ENCODE measurements at regions of chr1 and their contacts with region 1.

Region 1: GRCh38 chr1:27671964-27672749 is at the start of gene IFI6:
- DNase-seq: peak; percentile 89
- H3K4me3 Mint-ChIP-seq: peak within 1 kb of the TSS; percentile 91
- H3K27ac Mint-ChIP-seq: peak within 1 kb of the TSS; percentile 84
- H3K4me1 Mint-ChIP-seq: peaks cover 29% of the 10 kb centered on the region
- H3K27me3 Mint-ChIP-seq: no peaks in the 10 kb centered on the region
- total RNA-seq, gene IFI6: 76.4 TPM

Region 2: GRCh38 chr1:27632387-27633297 is 39.5 kb before region 1 on chr1:
- CTCF ChIA-PET with region 1: interaction called, 15 read pairs
- POLR2A ChIA-PET with region 1: no interaction called
- intact Hi-C with region 1: no loop called
- DNase-seq: peak; percentile 80
- H3K4me3 Mint-ChIP-seq: peak overlapping the region; percentile 24
- H3K27ac Mint-ChIP-seq: peak overlapping the region; percentile 74
- H3K4me1 Mint-ChIP-seq: peaks cover 69% of the 10 kb centered on the region
- H3K27me3 Mint-ChIP-seq: no peaks in the 10 kb centered on the region

Region 3: DNA sequence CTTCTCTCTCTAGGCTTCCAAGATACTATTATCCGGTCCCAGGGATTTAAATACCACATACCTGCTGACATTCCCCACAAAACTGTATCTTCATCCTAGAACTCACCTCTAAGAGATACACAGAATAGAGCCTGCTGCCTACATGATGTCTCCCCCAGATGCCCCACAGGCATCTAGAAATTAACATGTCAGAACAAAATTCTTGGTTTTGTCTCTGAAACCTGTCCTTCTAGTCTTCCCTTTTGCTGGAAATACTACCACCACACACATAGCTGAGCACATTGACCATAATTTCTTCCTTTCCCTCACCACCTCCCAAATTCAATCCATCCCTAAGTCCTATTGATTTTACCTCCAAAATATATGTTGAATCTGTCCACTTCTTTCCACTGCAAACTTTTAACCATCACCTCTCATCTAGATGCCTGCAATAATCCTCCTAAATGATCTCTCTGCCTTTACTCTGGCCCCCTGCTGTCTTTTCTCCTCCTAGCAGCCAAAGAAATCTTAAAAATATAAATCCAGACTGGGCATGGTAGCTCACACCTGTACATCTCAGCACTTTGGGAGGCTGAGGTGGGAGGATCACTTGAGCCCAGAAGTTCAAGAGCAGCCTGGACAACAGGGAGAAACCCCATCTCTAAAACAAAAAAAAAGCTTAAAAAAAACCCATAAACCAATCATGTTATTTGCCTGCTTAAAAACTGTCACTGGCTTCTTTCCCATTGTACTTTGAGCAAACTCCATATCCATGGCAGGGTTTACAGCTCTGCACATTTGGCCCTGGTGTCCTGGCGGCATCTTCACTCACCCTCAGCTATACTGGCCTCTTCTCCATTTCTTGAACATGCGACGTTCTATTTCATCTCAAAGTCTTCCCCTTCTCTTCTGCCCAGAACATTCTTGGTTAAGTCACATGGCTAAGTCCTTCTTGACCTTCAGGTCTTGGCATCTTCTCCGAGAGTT is 47.4 kb after region 1 on chr1:
- CTCF ChIA-PET with region 1: interaction called, 39 read pairs
- POLR2A ChIA-PET with region 1: no interaction called
- intact Hi-C with region 1: loop called (anchors 2 kb)
- DNase-seq: no peak
- H3K4me3 Mint-ChIP-seq: no peak overlapping the region
- H3K27ac Mint-ChIP-seq: no peak overlapping the region
- H3K4me1 Mint-ChIP-seq: peaks cover under 1% of the 10 kb centered on the region
- H3K27me3 Mint-ChIP-seq: peaks cover 17% of the 10 kb centered on the region

Region 4: DNA sequence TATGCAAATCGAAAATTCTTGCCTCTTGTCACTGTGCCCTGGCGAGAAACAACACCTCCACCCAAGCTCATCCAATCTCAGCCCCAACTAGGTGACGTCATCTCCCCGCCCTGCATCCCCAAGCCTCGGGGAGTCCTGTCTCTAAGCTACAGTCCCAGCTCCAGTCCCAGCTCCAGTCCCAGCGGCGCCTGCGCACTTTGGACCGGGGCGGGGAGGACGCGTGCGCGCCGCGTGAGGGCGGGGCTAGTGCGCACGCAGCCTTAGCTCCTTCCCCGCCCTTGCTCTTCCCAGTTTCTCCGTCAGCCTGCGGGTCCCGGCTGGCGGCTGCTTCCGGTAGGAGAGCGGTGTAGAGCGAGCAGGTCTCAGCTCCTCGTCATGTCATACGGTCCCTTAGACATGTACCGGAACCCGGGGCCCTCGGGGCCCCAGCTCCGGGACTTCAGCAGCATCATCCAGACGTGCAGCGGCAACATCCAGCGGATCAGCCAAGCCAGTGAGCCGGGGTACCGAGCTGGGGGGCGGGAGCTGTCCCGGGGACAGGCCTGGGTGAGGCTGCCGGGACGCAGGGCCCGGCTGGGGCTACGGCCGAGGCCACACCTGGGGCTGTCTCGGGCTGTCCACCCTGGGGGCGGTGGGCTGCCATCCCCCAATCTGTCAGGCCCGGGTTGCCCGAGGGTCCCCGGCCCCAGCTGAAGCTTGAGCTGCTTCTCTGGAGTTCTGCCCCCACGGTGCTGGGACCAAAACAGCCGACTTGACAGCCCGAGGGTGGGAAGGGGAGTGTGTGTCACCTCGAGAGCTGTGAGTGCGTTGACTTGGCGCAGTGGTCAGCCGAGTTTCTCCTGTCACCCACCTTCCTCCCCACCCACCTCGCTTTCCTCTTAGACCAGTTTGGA is 101.0 kb after region 1 on chr1 and contains the start of gene STX12:
- CTCF ChIA-PET with region 1: interaction called, 40 read pairs
- POLR2A ChIA-PET with region 1: interaction called, 4 read pairs
- intact Hi-C with region 1: loop called (anchors 5 kb)
- DNase-seq: peak; percentile 100
- H3K4me3 Mint-ChIP-seq: peak within 1 kb of the TSS; percentile 95
- H3K27ac Mint-ChIP-seq: peak within 1 kb of the TSS; percentile 99
- H3K4me1 Mint-ChIP-seq: peaks cover 35% of the 10 kb centered on the region
- H3K27me3 Mint-ChIP-seq: no peaks in the 10 kb centered on the region
- total RNA-seq, gene STX12: 31.8 to 32.0 TPM

Measured in activated CD4-positive, alpha-beta memory T cell treated with anti-CD3 and anti-CD28 coated beads for 36 hours (primary cell).